Activated B cell treated with CpG ODN at 0.5 μM for 24 hours (primary cell): ENCODE measurements at regions of chr7 and their contacts with region 1.

Region 1: GRCh38 chr7:121126801-121127534 is 138.5 kb downstream of the CPED1 start:
- DNase-seq: no peak
- ATAC-seq: no peak
- H3K4me3 Mint-ChIP-seq: no peak overlapping the region
- H3K27ac Mint-ChIP-seq: no peak overlapping the region
- H3K4me1 Mint-ChIP-seq: peaks cover 18% of the 10 kb centered on the region
- H3K27me3 Mint-ChIP-seq: no peaks in the 10 kb centered on the region
- CTCF ChIP-seq: no peak

Region 2: DNA sequence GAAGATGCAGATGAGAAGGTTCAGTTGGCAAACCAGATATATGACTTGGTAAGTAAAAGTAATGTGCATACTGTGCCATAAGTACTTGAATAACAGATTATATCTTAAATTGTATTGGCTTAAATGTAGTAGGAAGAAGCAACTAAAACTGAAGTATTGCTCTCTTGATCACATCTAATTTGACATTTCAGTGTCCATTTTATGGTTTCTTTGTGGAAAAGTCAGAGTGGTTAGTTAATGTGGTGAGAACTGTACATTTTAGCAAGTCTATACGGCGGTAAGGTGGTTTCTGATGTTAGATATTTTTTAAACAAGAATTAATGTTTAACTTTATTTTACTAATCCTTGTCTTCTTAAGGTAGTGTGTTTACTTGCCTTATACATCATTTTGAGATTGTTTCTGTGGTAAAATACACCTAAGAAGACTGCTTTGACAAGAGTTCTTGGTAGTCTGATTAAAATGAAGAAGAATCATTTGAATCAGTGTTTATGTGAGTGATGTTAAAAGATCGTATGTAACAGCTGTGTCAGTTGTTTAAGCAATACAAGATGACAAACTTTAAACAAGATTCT is 171.3 kb before region 1 on chr7:
- CTCF ChIA-PET with region 1: no interaction called
- POLR2A ChIA-PET with region 1: no interaction called
- intact Hi-C with region 1: no loop called
- DNase-seq: no peak
- ATAC-seq: no peak
- H3K4me3 Mint-ChIP-seq: no peak overlapping the region
- H3K27ac Mint-ChIP-seq: no peak overlapping the region
- H3K4me1 Mint-ChIP-seq: peaks cover 15% of the 10 kb centered on the region
- H3K27me3 Mint-ChIP-seq: no peaks in the 10 kb centered on the region
- CTCF ChIP-seq: no peak

Region 3: GRCh38 chr7:121167971-121168370 is 41.0 kb after region 1 on chr7:
- CTCF ChIA-PET with region 1: no interaction called
- POLR2A ChIA-PET with region 1: no interaction called
- intact Hi-C with region 1: loop called (anchors 5 kb)
- DNase-seq: no peak
- ATAC-seq: no peak
- H3K4me3 Mint-ChIP-seq: no peak overlapping the region
- H3K27ac Mint-ChIP-seq: no peak overlapping the region
- H3K4me1 Mint-ChIP-seq: peaks cover 44% of the 10 kb centered on the region
- H3K27me3 Mint-ChIP-seq: no peaks in the 10 kb centered on the region
- CTCF ChIP-seq: no peak

Region 4: DNA sequence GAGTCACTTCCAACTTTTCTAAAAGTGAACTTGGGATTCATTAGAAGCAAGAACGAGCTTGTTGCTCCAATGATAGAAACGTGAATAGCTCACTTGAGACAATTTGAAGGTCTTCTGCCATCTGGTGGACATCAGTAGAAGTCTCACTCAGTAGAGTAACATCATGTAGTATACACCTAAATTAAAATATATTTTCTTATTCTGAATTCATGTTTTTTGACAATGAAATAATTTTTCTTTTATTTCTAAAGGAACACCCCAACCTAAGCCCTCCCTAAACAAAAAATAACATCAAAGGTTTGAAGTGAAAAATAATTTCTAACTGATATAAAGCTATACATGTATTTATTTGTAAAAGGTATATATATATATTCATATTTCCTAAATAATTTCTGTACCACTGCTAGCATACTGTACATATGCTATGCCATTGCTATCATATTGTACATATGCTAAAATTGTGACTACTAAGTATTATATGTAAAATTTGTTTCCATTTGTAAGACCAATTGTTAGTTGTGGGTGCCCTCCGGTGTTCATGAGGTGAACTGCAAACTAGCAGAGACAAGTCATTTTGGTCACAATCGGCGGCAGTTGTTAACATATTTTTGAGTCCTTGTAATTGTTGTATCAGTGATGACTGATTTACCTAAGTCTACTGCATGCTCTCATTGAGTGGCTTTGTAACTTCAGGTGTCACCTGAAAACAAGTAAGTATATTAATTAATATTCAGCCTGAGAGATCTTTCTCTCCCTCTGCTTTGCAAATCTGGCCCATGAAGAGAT is 867.9 kb after region 1 on chr7:
- CTCF ChIA-PET with region 1: interaction called, 5 read pairs
- POLR2A ChIA-PET with region 1: no interaction called
- intact Hi-C with region 1: loop called (anchors 1 kb)
- DNase-seq: no peak
- ATAC-seq: peak; percentile 86
- H3K4me3 Mint-ChIP-seq: no peak overlapping the region
- H3K27ac Mint-ChIP-seq: no peak overlapping the region
- H3K4me1 Mint-ChIP-seq: no peaks in the 10 kb centered on the region
- H3K27me3 Mint-ChIP-seq: peaks cover 2% of the 10 kb centered on the region
- CTCF ChIP-seq: peak; percentile 83